ENCODE measurements at regions of chr1 and their contacts with region 1.

Region 1: GRCh38 chr1:24201941-24202440 is 14.9 kb upstream of the IFNLR1 start:
- DNase-seq: peak; percentile 29 to 57 (median 41)
- H3K4me3 ChIP-seq: no peak overlapping the region
- H3K4me3 Mint-ChIP-seq: no peak overlapping the region
- H3K27ac ChIP-seq: no peak overlapping the region
- H3K27ac Mint-ChIP-seq: no peak overlapping the region
- H3K4me1 ChIP-seq: peaks cover 6% of the 10 kb centered on the region
- H3K4me1 Mint-ChIP-seq: peaks cover 5 to 6% (median 6%) of the 10 kb centered on the region in 3 donors
- H3K27me3 ChIP-seq: no peaks in the 10 kb centered on the region
- H3K27me3 Mint-ChIP-seq: peaks cover 4 to 7% of the 10 kb centered on the region in 2 donors

Region 2: DNA sequence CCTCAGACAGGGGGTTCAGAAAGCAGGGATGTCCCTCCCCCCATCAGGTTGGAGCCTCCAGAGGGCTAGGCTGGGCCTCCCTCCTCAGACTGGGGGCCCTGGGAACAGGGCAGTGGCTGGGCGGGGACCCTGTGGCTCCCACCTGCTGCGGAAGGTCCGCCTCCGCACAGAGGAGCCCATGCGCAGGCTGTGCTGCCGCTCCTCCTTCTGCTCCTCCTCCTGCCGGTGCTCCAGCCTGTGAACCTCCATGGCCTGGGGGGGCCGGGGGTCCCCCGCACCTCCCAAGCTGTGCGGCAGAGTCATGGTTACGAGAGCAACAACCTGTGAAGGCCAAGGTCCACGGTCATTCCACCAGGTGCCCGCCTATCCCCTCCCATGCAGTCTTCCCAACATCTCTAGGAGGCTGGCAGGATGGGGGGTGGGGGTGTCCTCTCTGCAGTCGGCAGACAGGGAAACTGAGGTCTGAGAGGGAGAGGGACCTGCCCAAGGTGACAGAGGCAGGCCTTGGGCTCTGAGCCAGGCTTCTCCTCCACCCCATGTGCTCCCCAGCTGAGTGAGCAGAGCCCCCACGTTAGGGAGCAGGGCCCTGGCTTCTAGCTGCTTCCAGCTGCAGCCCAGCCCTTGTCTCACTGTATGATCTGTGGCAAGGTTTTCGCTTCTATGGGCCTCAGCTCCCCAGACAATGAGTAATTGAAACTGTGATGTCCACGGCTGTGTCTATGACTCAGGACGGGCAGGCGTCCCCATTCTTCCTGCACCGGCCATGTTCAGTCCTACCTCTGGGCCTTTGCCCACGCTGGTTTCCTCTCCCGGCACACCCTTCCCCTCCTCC is 93.4 kb before region 1 on chr1:
- CTCF ChIA-PET with region 1: no interaction called
- POLR2A ChIA-PET with region 1: no interaction called
- DNase-seq: no peak
- H3K4me3 ChIP-seq: no peak overlapping the region
- H3K4me3 Mint-ChIP-seq: no peak overlapping the region
- H3K27ac ChIP-seq: no peak overlapping the region
- H3K27ac Mint-ChIP-seq: peak overlapping the region in 1 of 8 donors; percentile 73
- H3K4me1 ChIP-seq: peaks cover 8% of the 10 kb centered on the region
- H3K4me1 Mint-ChIP-seq: peaks cover 0 to 12% (median 5%) of the 10 kb centered on the region in 3 donors
- H3K27me3 ChIP-seq: no peaks in the 10 kb centered on the region
- H3K27me3 Mint-ChIP-seq: peaks cover 4 to 12% of the 10 kb centered on the region in 2 donors

Region 3: GRCh38 chr1:24150234-24151174 is 51.5 kb before region 1 on chr1:
- CTCF ChIA-PET with region 1: interaction called, 42 read pairs
- POLR2A ChIA-PET with region 1: no interaction called
- DNase-seq: peak; percentile 69 to 89 (median 80)
- H3K4me3 ChIP-seq: no peak overlapping the region
- H3K4me3 Mint-ChIP-seq: peak overlapping the region in 6 of 7 donors; percentile 59 to 73 (median 62)
- H3K27ac ChIP-seq: no peak overlapping the region
- H3K27ac Mint-ChIP-seq: peak overlapping the region in 3 of 8 donors; percentile 6 to 65 (median 52)
- H3K4me1 ChIP-seq: peaks cover 11% of the 10 kb centered on the region
- H3K4me1 Mint-ChIP-seq: peaks cover 9 to 16% (median 11%) of the 10 kb centered on the region in 3 donors
- H3K27me3 ChIP-seq: peaks cover 7% of the 10 kb centered on the region
- H3K27me3 Mint-ChIP-seq: peaks cover 13 to 39% of the 10 kb centered on the region in 2 donors

Region 4: GRCh38 chr1:24379733-24380315 is 177.8 kb after region 1 on chr1:
- CTCF ChIA-PET with region 1: interaction called, 10 read pairs
- POLR2A ChIA-PET with region 1: no interaction called
- DNase-seq: no peak
- H3K4me3 ChIP-seq: no peak overlapping the region
- H3K4me3 Mint-ChIP-seq: no peak overlapping the region
- H3K27ac ChIP-seq: no peak overlapping the region
- H3K27ac Mint-ChIP-seq: peak overlapping the region in 1 of 8 donors; percentile 5
- H3K4me1 ChIP-seq: peaks cover 4% of the 10 kb centered on the region
- H3K4me1 Mint-ChIP-seq: peaks cover 6 to 7% (median 7%) of the 10 kb centered on the region in 3 donors
- H3K27me3 ChIP-seq: no peaks in the 10 kb centered on the region
- H3K27me3 Mint-ChIP-seq: no peaks in the 10 kb centered on the region

Region 5: GRCh38 chr1:24391882-24392603 is 190.1 kb after region 1 on chr1:
- CTCF ChIA-PET with region 1: interaction called, 276 read pairs
- POLR2A ChIA-PET with region 1: interaction called, 13 read pairs
- DNase-seq: peak; percentile 33 to 79 (median 49)
- H3K4me3 ChIP-seq: peak overlapping the region; percentile 44
- H3K4me3 Mint-ChIP-seq: peak overlapping the region; percentile 73 to 91 (median 80)
- H3K27ac ChIP-seq: peak overlapping the region; percentile 33
- H3K27ac Mint-ChIP-seq: peak overlapping the region; percentile 86 to 99 (median 97)
- H3K4me1 ChIP-seq: peaks cover 33% of the 10 kb centered on the region
- H3K4me1 Mint-ChIP-seq: peaks cover 23 to 27% (median 25%) of the 10 kb centered on the region in 3 donors
- H3K27me3 ChIP-seq: no peaks in the 10 kb centered on the region
- H3K27me3 Mint-ChIP-seq: peaks cover 0 to 2% of the 10 kb centered on the region in 2 donors

Region 6: GRCh38 chr1:24409535-24409934 is 207.5 kb after region 1 on chr1:
- CTCF ChIA-PET with region 1: interaction called, 17 read pairs
- POLR2A ChIA-PET with region 1: no interaction called
- DNase-seq: no peak
- H3K4me3 ChIP-seq: no peak overlapping the region
- H3K4me3 Mint-ChIP-seq: no peak overlapping the region
- H3K27ac ChIP-seq: no peak overlapping the region
- H3K27ac Mint-ChIP-seq: no peak overlapping the region
- H3K4me1 ChIP-seq: peaks cover 17% of the 10 kb centered on the region
- H3K4me1 Mint-ChIP-seq: peaks cover 8 to 25% (median 23%) of the 10 kb centered on the region in 3 donors
- H3K27me3 ChIP-seq: no peaks in the 10 kb centered on the region
- H3K27me3 Mint-ChIP-seq: no peaks in the 10 kb centered on the region

Region 7: GRCh38 chr1:24575915-24576587 is 374.1 kb after region 1 on chr1:
- CTCF ChIA-PET with region 1: interaction called, 3 read pairs
- POLR2A ChIA-PET with region 1: interaction called, 14 read pairs
- DNase-seq: no peak
- H3K4me3 ChIP-seq: no peak overlapping the region
- H3K4me3 Mint-ChIP-seq: no peak overlapping the region
- H3K27ac ChIP-seq: no peak overlapping the region
- H3K27ac Mint-ChIP-seq: peak overlapping the region in 1 of 8 donors; percentile 93
- H3K4me1 ChIP-seq: no peaks in the 10 kb centered on the region
- H3K4me1 Mint-ChIP-seq: peaks cover 6 to 10% (median 9%) of the 10 kb centered on the region in 3 donors
- H3K27me3 ChIP-seq: no peaks in the 10 kb centered on the region
- H3K27me3 Mint-ChIP-seq: peaks cover 0 to 3% of the 10 kb centered on the region in 2 donors

Region 8: DNA sequence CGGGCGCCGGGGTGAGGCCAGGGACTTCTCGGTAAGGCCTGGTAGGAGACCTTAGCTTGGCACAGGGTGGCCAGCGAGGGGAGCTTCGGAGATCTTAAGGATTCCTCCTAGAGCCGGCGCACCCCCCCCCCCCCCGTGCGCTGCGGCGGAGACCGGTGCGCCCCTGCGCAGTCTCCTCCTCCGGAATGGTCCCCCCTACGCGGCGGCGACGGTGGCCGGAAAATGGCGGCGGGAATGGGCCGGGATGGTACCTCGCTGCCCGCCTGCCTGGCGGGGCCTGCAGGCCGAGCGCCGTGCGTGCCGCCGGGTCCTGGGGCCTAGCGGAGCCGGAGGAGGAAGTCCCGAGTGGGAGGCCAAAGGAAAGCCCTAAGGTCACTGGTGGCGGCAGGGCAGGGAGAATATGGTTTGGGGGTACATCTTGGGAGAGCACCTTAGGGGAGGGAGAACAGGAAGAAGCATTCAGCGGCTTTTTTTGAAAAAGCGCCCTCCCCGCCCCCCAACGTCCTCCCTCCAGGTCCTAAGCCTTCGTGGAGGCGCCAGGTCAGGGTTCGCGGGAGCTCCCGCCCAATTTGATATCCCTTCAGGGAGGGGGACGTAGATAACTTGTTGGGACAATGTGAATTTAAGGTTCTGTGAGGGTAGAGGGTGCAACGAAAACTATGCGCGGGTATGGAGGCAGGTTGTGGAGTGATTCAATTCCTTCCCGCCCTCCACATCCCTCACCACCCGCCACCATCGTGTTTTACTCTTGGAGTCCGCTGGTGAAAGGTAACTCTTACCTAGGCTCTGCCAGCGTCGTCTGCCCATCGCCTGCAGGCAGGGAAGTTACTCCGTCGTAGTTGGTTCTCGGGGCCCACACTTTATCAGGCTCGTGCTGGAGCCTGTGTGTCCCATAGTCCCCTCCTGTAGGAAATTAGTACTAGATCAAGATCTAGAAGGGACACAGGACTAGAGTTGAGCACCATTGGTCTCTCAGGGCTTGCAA is 441.7 kb after region 1 on chr1:
- CTCF ChIA-PET with region 1: interaction called, 10 read pairs
- POLR2A ChIA-PET with region 1: interaction called, 3 read pairs
- DNase-seq: peak in 3 of 5 donors; percentile 6 to 70 (median 34)
- H3K4me3 ChIP-seq: peak overlapping the region; percentile 81
- H3K4me3 Mint-ChIP-seq: peak overlapping the region; percentile 92 to 98 (median 94)
- H3K27ac ChIP-seq: peak overlapping the region; percentile 81
- H3K27ac Mint-ChIP-seq: peak overlapping the region; percentile 90 to 100 (median 96)
- H3K4me1 ChIP-seq: peaks cover 29% of the 10 kb centered on the region
- H3K4me1 Mint-ChIP-seq: peaks cover 46 to 54% (median 48%) of the 10 kb centered on the region in 3 donors
- H3K27me3 ChIP-seq: no peaks in the 10 kb centered on the region
- H3K27me3 Mint-ChIP-seq: no peaks in the 10 kb centered on the region